ENCODE measurements at regions of chr17 and their contacts with region 1.

Region 1: DNA sequence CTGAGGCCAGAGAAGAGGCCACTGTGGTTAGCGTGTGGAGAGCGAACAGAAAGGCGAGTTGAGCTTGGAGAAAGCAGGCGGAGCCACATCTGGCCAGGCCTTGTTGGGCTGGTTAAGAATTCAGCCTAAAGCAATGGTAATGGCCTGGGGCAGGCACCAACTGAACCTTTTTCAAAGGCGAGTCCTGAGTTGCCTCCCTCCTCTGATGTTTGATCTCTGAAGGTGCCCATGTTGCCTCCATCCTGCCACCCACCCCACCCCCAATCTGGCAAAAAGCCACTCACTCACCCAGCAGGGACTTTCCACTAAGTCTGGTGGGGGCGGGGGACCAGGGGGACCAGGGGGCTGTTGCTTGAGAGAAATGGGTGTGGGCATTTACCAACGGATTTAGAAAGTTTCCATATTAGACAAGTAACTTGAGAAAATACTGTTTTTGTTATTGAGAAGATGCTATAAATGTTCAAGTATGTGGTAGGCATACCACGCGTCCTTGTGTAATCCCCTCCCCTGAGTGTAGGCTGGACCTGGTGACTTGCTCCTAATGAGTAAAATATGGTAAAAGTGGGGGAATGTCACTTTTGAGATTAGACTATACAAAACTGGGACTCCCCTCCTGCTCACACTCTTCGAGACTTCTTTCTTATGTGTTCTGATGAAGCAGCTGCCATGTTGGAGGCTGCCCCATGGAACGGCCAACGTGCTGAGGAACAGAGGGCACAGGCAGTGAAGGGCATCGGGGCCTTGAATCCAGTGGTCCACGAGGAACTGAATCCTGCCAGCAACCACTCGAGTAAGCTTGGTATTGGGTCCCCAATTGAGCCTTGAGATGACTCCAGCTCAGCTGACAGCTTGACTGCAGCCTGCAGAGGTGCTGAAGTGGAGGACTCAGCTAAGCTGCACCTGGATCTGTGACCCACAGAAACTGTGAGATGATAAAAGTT is 29.9 kb upstream of the TNS4 start:
- DNase-seq: peak; percentile 64
- H3K4me3 Mint-ChIP-seq: peak overlapping the region; percentile 13
- H3K27ac Mint-ChIP-seq: peak overlapping the region; percentile 72
- H3K4me1 Mint-ChIP-seq: peaks cover 75% of the 10 kb centered on the region
- H3K27me3 Mint-ChIP-seq: peaks cover 15% of the 10 kb centered on the region

Region 2: DNA sequence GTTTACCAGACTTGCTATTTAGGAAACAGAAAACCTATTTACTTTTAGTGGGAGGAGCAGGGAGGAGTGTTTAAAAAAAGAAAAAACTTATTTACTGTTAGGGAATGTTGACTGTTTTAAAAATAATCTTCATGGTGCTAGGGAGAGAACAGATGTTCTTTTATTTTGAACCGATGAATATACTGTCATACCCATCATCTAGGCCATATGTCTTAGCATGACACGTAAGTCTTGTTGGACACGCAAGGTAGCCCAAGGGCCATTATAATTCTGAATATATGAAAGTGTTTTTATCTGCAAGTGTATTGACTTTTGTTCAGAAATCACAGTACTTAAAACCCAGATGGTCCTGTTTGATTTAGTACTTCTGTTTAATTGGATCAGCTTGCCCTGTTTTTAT is 300.7 kb before region 1 on chr17:
- CTCF ChIA-PET with region 1: no interaction called
- POLR2A ChIA-PET with region 1: no interaction called
- DNase-seq: no peak
- H3K4me3 Mint-ChIP-seq: no peak overlapping the region
- H3K27ac Mint-ChIP-seq: no peak overlapping the region
- H3K4me1 Mint-ChIP-seq: no peaks in the 10 kb centered on the region
- H3K27me3 Mint-ChIP-seq: no peaks in the 10 kb centered on the region

Region 3: DNA sequence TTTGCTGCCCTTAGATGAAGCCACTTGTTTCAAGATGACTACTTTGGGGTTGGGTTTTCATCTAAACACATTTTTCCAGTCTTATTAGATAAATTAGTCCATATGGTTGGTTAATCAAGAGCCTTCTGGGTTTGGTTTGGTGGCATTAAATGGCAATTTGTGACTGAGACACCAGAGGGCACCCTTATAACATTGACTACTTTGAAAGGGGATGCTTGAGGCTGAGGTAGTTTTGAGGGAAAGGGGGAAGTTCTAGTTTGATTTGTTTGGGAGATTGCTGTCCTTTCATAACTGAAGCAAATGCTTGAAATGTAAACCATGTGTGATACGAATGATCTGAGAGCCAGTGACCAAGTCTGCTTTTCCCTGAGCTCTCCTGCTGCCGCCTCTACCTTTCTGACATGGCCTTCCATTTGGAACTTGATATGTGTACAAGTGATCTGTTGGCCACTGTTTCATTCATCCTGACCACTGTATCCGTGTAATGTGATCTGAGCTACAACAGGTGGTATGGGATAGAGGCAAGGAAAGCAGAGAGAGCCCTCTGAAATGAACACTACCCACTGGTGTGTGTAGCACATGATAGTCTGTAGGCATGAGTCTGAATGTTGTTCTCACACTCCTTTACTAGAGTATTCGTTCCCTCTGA is 228.2 kb before region 1 on chr17:
- CTCF ChIA-PET with region 1: interaction called, 12 read pairs
- POLR2A ChIA-PET with region 1: interaction called, 3 read pairs
- DNase-seq: peak; percentile 50
- H3K4me3 Mint-ChIP-seq: no peak overlapping the region
- H3K27ac Mint-ChIP-seq: no peak overlapping the region
- H3K4me1 Mint-ChIP-seq: peaks cover 15% of the 10 kb centered on the region
- H3K27me3 Mint-ChIP-seq: no peaks in the 10 kb centered on the region

Region 4: GRCh38 chr17:40399185-40399584 is 132.1 kb before region 1 on chr17:
- CTCF ChIA-PET with region 1: interaction called, 13 read pairs
- POLR2A ChIA-PET with region 1: interaction called, 9 read pairs
- DNase-seq: no peak
- H3K4me3 Mint-ChIP-seq: no peak overlapping the region
- H3K27ac Mint-ChIP-seq: no peak overlapping the region
- H3K4me1 Mint-ChIP-seq: peaks cover 25% of the 10 kb centered on the region
- H3K27me3 Mint-ChIP-seq: no peaks in the 10 kb centered on the region

Region 5: GRCh38 chr17:40427002-40427491 is 104.3 kb before region 1 on chr17:
- CTCF ChIA-PET with region 1: interaction called, 24 read pairs
- POLR2A ChIA-PET with region 1: interaction called, 5 read pairs
- DNase-seq: peak; percentile 35
- H3K4me3 Mint-ChIP-seq: no peak overlapping the region
- H3K27ac Mint-ChIP-seq: peak overlapping the region; percentile 67
- H3K4me1 Mint-ChIP-seq: peaks cover 29% of the 10 kb centered on the region
- H3K27me3 Mint-ChIP-seq: peaks cover 31% of the 10 kb centered on the region

Region 6: DNA sequence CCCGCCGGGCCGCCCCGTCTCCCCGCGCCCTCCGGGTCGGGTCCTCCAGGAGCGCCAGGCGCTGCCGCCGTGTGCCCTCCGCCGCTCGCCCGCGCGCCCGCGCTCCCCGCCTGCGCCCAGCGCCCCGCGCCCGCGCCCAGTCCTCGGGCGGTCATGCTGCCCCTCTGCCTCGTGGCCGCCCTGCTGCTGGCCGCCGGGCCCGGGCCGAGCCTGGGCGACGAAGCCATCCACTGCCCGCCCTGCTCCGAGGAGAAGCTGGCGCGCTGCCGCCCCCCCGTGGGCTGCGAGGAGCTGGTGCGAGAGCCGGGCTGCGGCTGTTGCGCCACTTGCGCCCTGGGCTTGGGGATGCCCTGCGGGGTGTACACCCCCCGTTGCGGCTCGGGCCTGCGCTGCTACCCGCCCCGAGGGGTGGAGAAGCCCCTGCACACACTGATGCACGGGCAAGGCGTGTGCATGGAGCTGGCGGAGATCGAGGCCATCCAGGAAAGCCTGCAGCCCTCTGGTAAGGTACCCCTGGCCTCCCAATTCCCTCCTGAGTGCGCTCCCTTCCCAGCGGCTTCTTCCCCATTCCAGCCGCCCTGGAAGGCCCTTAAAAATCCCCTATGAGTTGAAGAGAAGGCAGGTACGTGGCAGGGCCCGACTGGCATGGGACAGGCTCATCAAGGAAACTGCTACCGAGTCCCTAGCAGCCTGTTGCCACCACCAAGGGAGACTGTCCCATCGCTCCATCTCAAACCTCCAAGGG is 87.6 kb before region 1 on chr17:
- CTCF ChIA-PET with region 1: interaction called, 129 read pairs
- POLR2A ChIA-PET with region 1: interaction called, 56 read pairs
- DNase-seq: peak; percentile 72
- H3K4me3 Mint-ChIP-seq: peak overlapping the region; percentile 82
- H3K27ac Mint-ChIP-seq: peak overlapping the region; percentile 88
- H3K4me1 Mint-ChIP-seq: peaks cover 48% of the 10 kb centered on the region
- H3K27me3 Mint-ChIP-seq: peaks cover 31% of the 10 kb centered on the region

Region 7: GRCh38 chr17:40480501-40481003 is 50.8 kb before region 1 on chr17:
- CTCF ChIA-PET with region 1: interaction called, 57 read pairs
- POLR2A ChIA-PET with region 1: interaction called, 110 read pairs
- DNase-seq: peak; percentile 91
- H3K4me3 Mint-ChIP-seq: peak overlapping the region; percentile 55
- H3K27ac Mint-ChIP-seq: peak overlapping the region; percentile 89
- H3K4me1 Mint-ChIP-seq: peaks cover 90% of the 10 kb centered on the region
- H3K27me3 Mint-ChIP-seq: peaks cover 5% of the 10 kb centered on the region

Region 8: GRCh38 chr17:40542558-40543411 is 11.5 kb after region 1 on chr17:
- CTCF ChIA-PET with region 1: interaction called, 10 read pairs
- POLR2A ChIA-PET with region 1: interaction called, 11 read pairs
- DNase-seq: no peak
- H3K4me3 Mint-ChIP-seq: no peak overlapping the region
- H3K27ac Mint-ChIP-seq: no peak overlapping the region
- H3K4me1 Mint-ChIP-seq: peaks cover 60% of the 10 kb centered on the region
- H3K27me3 Mint-ChIP-seq: peaks cover 41% of the 10 kb centered on the region

Region 9: DNA sequence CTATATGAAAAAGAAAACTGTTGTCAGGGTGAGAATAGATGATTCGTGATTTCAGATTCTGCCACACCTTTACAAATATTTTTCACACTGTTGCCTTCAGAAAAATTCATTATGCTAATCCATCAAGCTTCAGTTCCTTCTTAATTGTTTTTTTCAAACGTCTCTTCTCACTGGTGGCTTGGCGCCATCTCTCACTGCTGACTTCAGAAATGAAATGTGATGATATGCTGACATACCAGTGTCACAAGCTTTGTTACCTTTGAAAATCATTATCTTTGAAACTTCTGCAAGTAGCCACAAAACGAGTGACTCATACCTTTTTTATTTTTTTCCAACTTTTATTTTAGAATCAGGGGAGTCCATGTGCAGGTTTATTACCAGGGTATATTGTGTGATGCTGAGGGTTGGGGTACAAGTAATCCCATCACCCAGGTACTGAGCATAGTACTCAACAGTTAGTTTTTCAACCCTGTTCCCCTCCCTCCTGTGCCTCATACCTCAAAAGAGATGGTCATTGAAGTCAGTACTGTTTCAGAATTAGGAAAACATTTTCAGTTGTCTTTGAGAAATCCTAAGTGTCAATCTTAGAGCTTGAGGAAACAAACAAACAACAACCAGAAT is 147.7 kb after region 1 on chr17:
- CTCF ChIA-PET with region 1: no interaction called
- POLR2A ChIA-PET with region 1: no interaction called
- DNase-seq: no peak
- H3K4me3 Mint-ChIP-seq: no peak overlapping the region
- H3K27ac Mint-ChIP-seq: no peak overlapping the region
- H3K4me1 Mint-ChIP-seq: peaks cover 3% of the 10 kb centered on the region
- H3K27me3 Mint-ChIP-seq: peaks cover 50% of the 10 kb centered on the region